ENCODE measurements at regions of chr3 and their contacts with region 1.

Region 1: GRCh38 chr3:13895155-13896105 is 15.6 kb upstream of the WNT7A start:
- DNase-seq: peak; percentile 94 to 97
- ATAC-seq: peak; percentile 95 to 99 (median 98)
- H3K4me3 ChIP-seq: peak overlapping the region; percentile 80
- H3K27ac ChIP-seq: peak overlapping the region; percentile 27
- H3K4me1 ChIP-seq: peaks cover 8% of the 10 kb centered on the region
- H3K27me3 ChIP-seq: peaks cover 0 to 38% (median 0%) of the 10 kb centered on the region in 3 donors
- CTCF ChIP-seq: no peak

Region 2: DNA sequence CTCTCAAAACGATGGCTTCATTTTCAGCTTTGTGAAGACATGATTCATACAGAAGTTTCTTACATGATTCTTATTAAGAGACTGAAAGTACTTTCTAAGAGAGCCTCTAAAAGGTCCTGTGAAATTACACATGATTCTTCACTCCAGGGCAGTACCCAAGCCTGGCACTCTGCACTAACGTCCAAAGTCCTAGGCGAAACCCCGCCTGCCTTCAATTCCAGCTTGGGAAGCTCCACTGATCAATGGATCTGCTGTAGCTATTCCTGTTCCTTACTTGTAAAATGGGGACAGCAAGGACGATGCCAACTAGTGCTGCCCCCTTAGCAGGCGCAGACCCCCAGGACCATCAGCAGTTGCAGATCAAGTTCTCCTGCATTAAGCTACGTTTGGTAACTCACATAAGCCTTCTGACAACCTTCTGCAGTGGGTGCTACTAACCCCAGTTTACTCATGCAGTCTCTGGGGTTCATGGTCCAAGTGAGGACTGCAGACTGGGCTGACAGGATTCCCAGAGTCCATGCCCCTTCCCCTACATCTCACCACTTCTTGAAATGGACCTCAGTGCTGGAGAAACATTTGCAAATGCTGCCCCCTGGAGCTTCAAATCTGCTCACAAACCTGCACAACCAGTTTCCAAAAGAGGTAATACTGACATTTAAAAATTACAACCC is 218.7 kb after region 1 on chr3:
- intact Hi-C with region 1: loop called in 1 of 2 experiments (anchors 5 kb)
- DNase-seq: no peak
- ATAC-seq: no peak
- H3K4me3 ChIP-seq: no peak overlapping the region
- H3K27ac ChIP-seq: no peak overlapping the region
- H3K4me1 ChIP-seq: no peaks in the 10 kb centered on the region
- H3K27me3 ChIP-seq: no peaks in the 10 kb centered on the region
- CTCF ChIP-seq: no peak

Region 3: DNA sequence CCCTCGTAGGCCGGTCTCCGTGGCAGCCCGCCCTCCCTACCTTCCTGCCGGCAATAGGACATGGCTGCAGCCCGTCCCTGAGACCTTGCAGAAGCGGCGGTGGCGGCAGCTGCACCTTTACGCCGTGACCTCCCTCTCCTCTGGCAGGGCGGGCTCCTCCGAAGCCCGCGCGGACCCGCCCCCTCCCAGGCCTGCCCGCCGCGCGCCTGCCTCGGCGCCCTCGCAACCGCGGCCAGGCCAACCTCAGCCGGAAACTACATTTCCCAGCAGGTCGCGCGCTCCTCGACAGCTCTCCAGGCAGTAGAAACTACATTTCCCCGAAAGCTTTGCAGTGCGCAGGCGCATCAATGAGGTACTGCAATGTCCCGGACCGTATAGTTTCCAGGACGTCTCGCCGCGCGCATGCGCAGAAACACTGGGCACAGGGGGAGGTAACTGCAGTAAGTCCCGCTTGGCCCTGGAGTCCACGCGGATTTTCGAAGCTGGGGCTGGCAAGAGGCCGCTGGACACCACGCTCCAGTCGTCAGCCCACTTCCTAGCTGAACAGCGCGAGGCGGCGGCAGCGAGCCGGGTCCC is 229.3 kb after region 1 on chr3 and contains the starts of genes CHCHD4 and TMEM43:
- intact Hi-C with region 1: loop called (anchors 5 kb)
- DNase-seq: peak; percentile 100
- ATAC-seq: peak; percentile 78 to 93 (median 85)
- H3K4me3 ChIP-seq: peak within 1 kb of the TSS; percentile 98
- H3K27ac ChIP-seq: peak within 1 kb of the TSS; percentile 97
- H3K4me1 ChIP-seq: peaks cover 30% of the 10 kb centered on the region
- H3K27me3 ChIP-seq: no peaks in the 10 kb centered on the region
- CTCF ChIP-seq: no peak
- total RNA-seq, gene CHCHD4: 18.5 to 26.8 (median 19.5) TPM
- total RNA-seq, gene TMEM43: 28.2 to 107 (median 34.2) TPM

Region 4: DNA sequence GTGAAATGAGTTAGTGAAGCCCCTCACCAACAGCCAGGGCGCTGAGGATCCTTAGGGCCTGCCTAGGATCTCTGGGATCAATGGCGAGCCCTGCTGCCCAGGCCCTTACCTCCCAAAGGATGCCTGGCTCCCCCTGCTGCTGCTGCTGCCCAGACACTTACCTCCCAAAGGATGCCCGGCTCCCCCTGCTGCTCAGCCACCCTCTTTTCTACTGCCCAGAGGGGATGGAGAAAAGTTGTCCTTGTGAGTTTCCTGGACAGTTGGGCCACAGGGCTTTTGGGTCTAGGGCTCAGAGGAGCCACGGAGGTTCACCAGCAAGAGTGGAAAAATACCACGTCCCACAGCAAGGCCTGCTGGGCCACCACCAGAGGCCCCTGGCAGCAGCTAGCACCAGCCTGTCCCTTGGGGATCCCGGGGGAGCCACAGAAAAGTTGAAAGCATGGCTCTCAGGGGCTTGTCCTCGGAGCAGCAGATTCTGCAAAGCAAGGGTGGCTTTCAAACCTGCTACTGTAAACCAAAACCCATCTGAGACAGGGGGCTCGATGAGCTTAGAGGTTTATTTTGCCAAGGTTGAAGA is 566.4 kb after region 1 on chr3:
- intact Hi-C with region 1: loop called in 1 of 2 experiments (anchors 10 kb)
- DNase-seq: no peak
- ATAC-seq: peak; percentile 26 to 58 (median 36)
- H3K4me3 ChIP-seq: no peak overlapping the region
- H3K27ac ChIP-seq: no peak overlapping the region
- H3K4me1 ChIP-seq: peaks cover 23% of the 10 kb centered on the region
- H3K27me3 ChIP-seq: no peaks in the 10 kb centered on the region
- CTCF ChIP-seq: peak; percentile 39

Region 5: DNA sequence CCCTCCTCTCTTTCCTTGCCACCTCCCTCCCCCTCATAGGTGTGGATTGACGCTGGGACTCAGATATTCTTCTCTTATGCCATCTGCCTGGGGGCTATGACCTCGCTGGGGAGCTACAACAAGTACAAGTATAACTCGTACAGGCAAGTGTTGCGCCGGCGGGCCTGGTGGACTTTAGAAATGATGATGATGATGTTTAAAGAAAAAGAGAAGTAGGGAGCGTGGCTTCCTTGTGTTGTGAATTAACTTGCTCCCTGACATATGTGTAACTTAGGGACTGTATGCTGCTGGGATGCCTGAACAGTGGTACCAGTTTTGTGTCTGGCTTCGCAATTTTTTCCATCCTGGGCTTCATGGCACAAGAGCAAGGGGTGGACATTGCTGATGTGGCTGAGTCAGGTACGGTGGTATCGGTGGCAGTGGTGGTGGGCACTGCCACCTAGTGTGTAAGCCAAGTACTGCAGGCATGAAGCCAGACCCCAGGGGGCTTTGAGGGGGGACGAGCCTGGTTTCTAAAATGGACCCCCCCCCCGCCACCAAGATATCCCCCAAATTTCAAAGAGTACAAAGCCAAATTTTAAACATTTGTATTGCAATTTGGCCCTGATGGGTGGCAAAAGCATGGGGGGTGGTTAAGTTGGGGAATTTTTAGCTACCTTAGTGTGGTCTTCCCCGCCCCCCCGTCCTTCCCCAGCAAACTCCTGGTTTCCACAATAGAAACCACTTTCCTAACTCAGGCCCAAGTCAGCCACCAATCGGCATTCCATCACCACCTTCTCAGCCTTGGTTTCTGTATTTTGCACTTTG is 572.6 kb after region 1 on chr3:
- intact Hi-C with region 1: loop called (anchors 5 to 10 kb)
- DNase-seq: no peak
- ATAC-seq: peak; percentile 64 to 84 (median 72)
- H3K4me3 ChIP-seq: no peak overlapping the region
- H3K27ac ChIP-seq: no peak overlapping the region
- H3K4me1 ChIP-seq: peaks cover 8% of the 10 kb centered on the region
- H3K27me3 ChIP-seq: no peaks in the 10 kb centered on the region
- CTCF ChIP-seq: peak; percentile 86

Measured in psoas muscle (tissue), 8 donors.